ENCODE measurements at regions of chr7 and their contacts with region 1.

Region 1: GRCh38 chr7:131538071-131538790 is 18.2 kb downstream of the PODXL start:
- DNase-seq: no peak
- ATAC-seq: peak in 5 of 8 donors; percentile 2 to 34 (median 9)
- H3K4me3 ChIP-seq: peak overlapping the region in 1 of 10 donors; percentile 7
- H3K27ac ChIP-seq: peak overlapping the region; percentile 0 to 92 (median 78)
- H3K4me1 ChIP-seq: peaks cover 44 to 100% (median 87%) of the 10 kb centered on the region in 9 donors
- H3K27me3 ChIP-seq: no peaks in the 10 kb centered on the region
- CTCF ChIP-seq: no peak

Region 2: DNA sequence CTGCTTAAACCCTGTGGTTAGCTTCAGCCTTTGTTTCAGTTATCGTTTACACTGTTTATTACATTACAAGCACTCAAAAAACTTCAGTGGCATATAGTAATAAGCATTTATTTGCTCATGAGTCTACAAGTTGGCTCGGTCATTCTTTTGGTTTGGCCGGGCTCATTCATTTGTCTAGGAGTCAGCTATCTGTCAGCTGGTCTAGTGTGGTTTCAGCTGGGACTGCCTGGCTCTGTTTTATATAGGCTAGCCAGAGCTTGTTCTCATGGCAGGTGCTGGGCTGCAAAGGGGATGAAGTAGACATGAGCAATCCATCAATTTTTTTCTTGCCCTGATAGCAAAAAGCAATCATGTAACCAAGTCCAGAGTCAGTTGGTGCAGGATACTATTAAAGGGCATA is 106.9 kb before region 1 on chr7:
- intact Hi-C with region 1: no loop called
- DNase-seq: peak in 1 of 2 donors; percentile 44
- ATAC-seq: peak; percentile 61 to 92 (median 83)
- H3K4me3 ChIP-seq: no peak overlapping the region
- H3K27ac ChIP-seq: peak overlapping the region in 1 of 10 donors; percentile 18
- H3K4me1 ChIP-seq: peaks cover 0 to 32% (median 17%) of the 10 kb centered on the region in 9 donors
- H3K27me3 ChIP-seq: no peaks in the 10 kb centered on the region
- CTCF ChIP-seq: no peak

Region 3: GRCh38 chr7:131513245-131514061 is 24.8 kb before region 1 on chr7:
- intact Hi-C with region 1: loop called in 5 of 10 experiments (anchors 2 to 5 kb)
- DNase-seq: peak; percentile 85 to 86
- ATAC-seq: peak; percentile 85 to 93 (median 91)
- H3K4me3 ChIP-seq: no peak overlapping the region
- H3K27ac ChIP-seq: peak overlapping the region in 9 of 10 donors; percentile 3 to 82 (median 50)
- H3K4me1 ChIP-seq: peaks cover 13 to 81% (median 46%) of the 10 kb centered on the region in 9 donors
- H3K27me3 ChIP-seq: no peaks in the 10 kb centered on the region
- CTCF ChIP-seq: peak; percentile 85 to 99 (median 96)

Region 4: GRCh38 chr7:131521651-131522163 is 16.5 kb before region 1 on chr7:
- intact Hi-C with region 1: loop called in 1 of 10 experiments (anchors 2 kb)
- DNase-seq: peak; percentile 56 to 66
- ATAC-seq: peak; percentile 48 to 78 (median 66)
- H3K4me3 ChIP-seq: peak overlapping the region in 4 of 10 donors; percentile 20 to 21 (median 20)
- H3K27ac ChIP-seq: peak overlapping the region; percentile 65 to 89 (median 73)
- H3K4me1 ChIP-seq: peaks cover 4 to 98% (median 49%) of the 10 kb centered on the region in 9 donors
- H3K27me3 ChIP-seq: no peaks in the 10 kb centered on the region
- CTCF ChIP-seq: no peak

Measured in heart right ventricle (tissue), 16 donors.